IMR-90 (cell line): ENCODE measurements at regions of chr3 and their contacts with region 1.

Region 1: DNA sequence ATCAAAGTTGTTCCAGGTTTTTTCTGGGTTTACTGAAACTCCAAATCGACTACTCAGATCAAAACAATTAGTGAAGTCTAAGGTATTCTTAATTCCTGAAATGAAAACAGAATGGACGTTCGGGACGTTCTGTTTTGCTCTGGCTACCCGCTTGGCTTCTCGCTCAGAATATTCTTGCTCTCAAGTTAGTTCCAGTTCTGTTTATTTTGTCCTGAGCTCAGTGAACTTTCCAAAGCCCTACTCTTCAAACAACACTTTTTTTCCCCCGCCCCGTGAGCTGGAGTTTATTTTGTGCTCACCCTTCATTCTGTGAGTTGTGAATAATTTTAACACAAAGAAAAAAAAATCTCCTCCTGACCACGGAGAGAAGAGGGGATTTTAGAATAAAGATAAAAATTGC is 72.6 kb downstream of the SAMMSON start:
- DNase-seq: no peak
- ATAC-seq: no peak
- H3K4me3 ChIP-seq: peak overlapping the region; percentile 31; the same call in 1 of the 2 replicates
- H3K27ac ChIP-seq: no peak overlapping the region
- H3K4me1 ChIP-seq: no peaks in the 10 kb centered on the region
- H3K27me3 ChIP-seq: peaks cover 31% of the 10 kb centered on the region
- CTCF ChIP-seq: no peak
- POLR2A ChIP-seq: no peak
- RAD21 ChIP-seq: no peak

Region 2: GRCh38 chr3:69200384-69201068 is 871.7 kb before region 1 on chr3:
- CTCF ChIA-PET with region 1: no interaction called
- POLR2A ChIA-PET with region 1: no interaction called
- dilution Hi-C with region 1: no loop called
- in situ Hi-C with region 1: no loop called
- intact Hi-C with region 1: no loop called
- DNase-seq: peak; percentile 19
- ATAC-seq: peak; percentile 14; the same call in 1 of the 2 replicates
- H3K4me3 ChIP-seq: no peak overlapping the region
- H3K27ac ChIP-seq: no peak overlapping the region
- H3K4me1 ChIP-seq: no peaks in the 10 kb centered on the region
- H3K27me3 ChIP-seq: peaks cover 15% of the 10 kb centered on the region
- CTCF ChIP-seq: no peak
- POLR2A ChIP-seq: no peak
- RAD21 ChIP-seq: no peak

Region 3: DNA sequence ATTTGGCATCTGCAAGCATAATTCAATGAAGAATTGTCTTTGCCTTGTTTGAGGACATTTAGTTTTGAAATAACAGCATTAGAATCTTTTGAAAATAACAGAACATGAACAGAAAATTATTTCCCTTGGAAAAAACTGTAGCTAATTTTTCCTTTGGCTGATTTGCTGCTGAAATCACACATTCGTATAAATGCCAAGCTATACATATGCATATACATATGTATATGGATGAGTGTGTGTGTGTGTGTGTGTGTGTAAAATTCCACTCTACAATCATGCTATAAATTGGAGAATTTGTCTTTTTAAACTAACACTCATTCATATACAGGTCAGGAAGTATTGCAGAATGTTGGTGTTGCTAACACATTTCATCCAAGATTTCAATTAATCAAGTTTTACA is 14.8 kb before region 1 on chr3:
- CTCF ChIA-PET with region 1: interaction called, 3 read pairs
- POLR2A ChIA-PET with region 1: no interaction called
- dilution Hi-C with region 1: no loop called
- in situ Hi-C with region 1: no loop called
- intact Hi-C with region 1: loop called (anchors 1 kb)
- DNase-seq: no peak
- ATAC-seq: no peak
- H3K4me3 ChIP-seq: no peak overlapping the region
- H3K27ac ChIP-seq: no peak overlapping the region
- H3K4me1 ChIP-seq: no peaks in the 10 kb centered on the region
- H3K27me3 ChIP-seq: peaks cover 15% of the 10 kb centered on the region
- CTCF ChIP-seq: no peak
- POLR2A ChIP-seq: no peak
- RAD21 ChIP-seq: no peak

Region 4: DNA sequence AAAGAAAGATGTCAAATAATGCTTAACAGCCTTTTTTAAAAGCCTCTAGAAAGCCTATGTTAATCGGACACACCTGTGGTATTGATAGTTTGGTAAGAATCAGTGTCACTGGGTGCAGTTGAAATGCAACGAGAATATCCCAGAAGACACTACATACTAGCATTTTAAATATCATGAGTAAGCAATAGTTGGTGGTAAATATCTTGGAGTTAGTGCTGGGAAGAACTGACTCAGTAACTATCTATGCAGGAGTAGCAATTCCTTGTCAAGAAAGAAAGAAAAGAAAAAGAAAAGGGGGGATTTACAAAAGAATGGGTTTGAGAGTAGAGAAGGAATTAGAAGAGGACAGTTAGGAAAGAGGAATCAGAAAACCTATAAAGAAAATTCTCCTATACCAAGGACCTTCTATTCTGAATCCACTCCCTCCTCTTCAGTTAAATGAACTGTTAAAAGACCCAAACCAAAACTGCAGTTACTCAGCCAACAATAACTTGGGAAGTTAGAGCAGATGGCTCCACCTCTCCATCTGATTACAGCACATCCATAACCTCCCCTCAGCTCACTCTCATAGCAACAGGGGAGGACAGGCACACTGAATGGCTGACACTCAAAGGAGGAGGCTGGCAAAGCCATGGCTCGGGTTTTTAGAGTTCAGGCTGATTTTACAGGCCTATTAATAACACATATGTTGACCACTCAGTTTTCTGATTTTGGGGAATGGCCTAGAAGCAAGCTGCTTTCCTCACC is 447.9 kb after region 1 on chr3:
- CTCF ChIA-PET with region 1: no interaction called
- POLR2A ChIA-PET with region 1: no interaction called
- dilution Hi-C with region 1: no loop called
- in situ Hi-C with region 1: no loop called
- intact Hi-C with region 1: loop called (anchors 10 kb)
- DNase-seq: peak; percentile 24
- ATAC-seq: no peak
- H3K4me3 ChIP-seq: no peak overlapping the region
- H3K27ac ChIP-seq: no peak overlapping the region
- H3K4me1 ChIP-seq: no peaks in the 10 kb centered on the region
- H3K27me3 ChIP-seq: peaks cover 18% of the 10 kb centered on the region
- CTCF ChIP-seq: no peak
- POLR2A ChIP-seq: no peak
- RAD21 ChIP-seq: no peak